Mammary epithelial cell (primary cell): ENCODE measurements at regions of chr12 and their contacts with region 1.

Region 1: GRCh38 chr12:125183187-125184067 is 118.2 kb downstream of the AACS start:
- DNase-seq: peak; percentile 58
- H3K4me3 ChIP-seq: no peak overlapping the region
- H3K27ac ChIP-seq: no peak overlapping the region
- H3K4me1 ChIP-seq: peaks cover 12% of the 10 kb centered on the region
- H3K27me3 ChIP-seq: peaks cover 13% of the 10 kb centered on the region
- CTCF ChIP-seq: peak; percentile 97 to 99

Region 2: GRCh38 chr12:124992874-124993625 is 190.4 kb before region 1 on chr12:
- CTCF ChIA-PET with region 1: no interaction called
- dilution Hi-C with region 1: no loop called
- in situ Hi-C with region 1: no loop called
- intact Hi-C with region 1: loop called (anchors 10 kb)
- DNase-seq: peak; percentile 68
- H3K4me3 ChIP-seq: peak overlapping the region; percentile 68 to 89 (median 79)
- H3K27ac ChIP-seq: peak overlapping the region; percentile 12
- H3K4me1 ChIP-seq: peaks cover 17% of the 10 kb centered on the region
- H3K27me3 ChIP-seq: no peaks in the 10 kb centered on the region
- CTCF ChIP-seq: peak; percentile 35 to 53

Region 3: GRCh38 chr12:125159683-125160082 is 23.7 kb before region 1 on chr12:
- CTCF ChIA-PET with region 1: no interaction called
- dilution Hi-C with region 1: no loop called
- in situ Hi-C with region 1: no loop called
- intact Hi-C with region 1: no loop called
- DNase-seq: no peak
- H3K4me3 ChIP-seq: no peak overlapping the region
- H3K27ac ChIP-seq: no peak overlapping the region
- H3K4me1 ChIP-seq: peaks cover 6% of the 10 kb centered on the region
- H3K27me3 ChIP-seq: no peaks in the 10 kb centered on the region
- CTCF ChIP-seq: no peak

Region 4: DNA sequence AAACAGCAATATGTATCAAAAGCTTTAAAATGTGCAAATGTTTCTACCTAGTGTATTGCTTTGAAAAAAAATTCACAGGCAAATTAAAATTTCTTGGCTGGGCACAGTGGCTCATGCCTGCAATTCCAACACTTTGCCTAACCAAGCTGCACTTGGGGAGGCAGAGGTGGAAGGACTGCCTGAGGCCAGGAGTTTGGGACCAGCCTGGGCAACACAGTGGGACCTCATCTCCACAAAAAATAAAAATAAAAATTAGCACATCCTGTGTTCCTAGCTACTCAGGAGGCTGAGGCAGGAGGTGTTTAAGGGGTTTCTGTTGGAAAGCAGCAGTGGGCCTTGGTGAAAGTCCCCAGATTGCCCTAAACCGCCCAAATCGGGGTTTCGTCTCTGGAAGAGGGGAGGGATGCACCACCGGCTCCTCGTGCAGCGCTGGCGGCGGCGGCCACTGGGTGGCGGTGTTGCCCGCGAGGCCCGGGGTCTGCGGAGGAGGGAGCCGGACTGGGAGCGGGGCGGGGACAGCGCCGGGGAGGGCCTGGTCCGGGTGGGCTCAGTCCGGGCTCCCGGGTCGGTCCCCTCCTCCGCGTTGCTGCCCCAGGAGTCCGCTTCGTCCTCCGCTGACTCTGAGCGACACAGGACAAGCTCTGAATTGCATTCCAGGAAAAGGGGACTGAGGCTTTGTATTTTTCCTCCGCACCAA is 147.4 kb after region 1 on chr12:
- CTCF ChIA-PET with region 1: no interaction called
- dilution Hi-C with region 1: no loop called
- in situ Hi-C with region 1: no loop called
- intact Hi-C with region 1: loop called (anchors 5 kb)
- DNase-seq: peak; percentile 27
- H3K4me3 ChIP-seq: peak overlapping the region; percentile 21 to 43 (median 36)
- H3K27ac ChIP-seq: no peak overlapping the region
- H3K4me1 ChIP-seq: no peaks in the 10 kb centered on the region
- H3K27me3 ChIP-seq: no peaks in the 10 kb centered on the region
- CTCF ChIP-seq: peak; percentile 54 to 84

Region 5: GRCh38 chr12:126069549-126070165 is 886.2 kb after region 1 on chr12:
- CTCF ChIA-PET with region 1: no interaction called
- dilution Hi-C with region 1: no loop called
- in situ Hi-C with region 1: no loop called
- intact Hi-C with region 1: loop called (anchors 10 kb)
- DNase-seq: peak; percentile 36
- H3K4me3 ChIP-seq: no peak overlapping the region
- H3K27ac ChIP-seq: no peak overlapping the region
- H3K4me1 ChIP-seq: no peaks in the 10 kb centered on the region
- H3K27me3 ChIP-seq: no peaks in the 10 kb centered on the region
- CTCF ChIP-seq: peak; percentile 51 to 56

Region 6: DNA sequence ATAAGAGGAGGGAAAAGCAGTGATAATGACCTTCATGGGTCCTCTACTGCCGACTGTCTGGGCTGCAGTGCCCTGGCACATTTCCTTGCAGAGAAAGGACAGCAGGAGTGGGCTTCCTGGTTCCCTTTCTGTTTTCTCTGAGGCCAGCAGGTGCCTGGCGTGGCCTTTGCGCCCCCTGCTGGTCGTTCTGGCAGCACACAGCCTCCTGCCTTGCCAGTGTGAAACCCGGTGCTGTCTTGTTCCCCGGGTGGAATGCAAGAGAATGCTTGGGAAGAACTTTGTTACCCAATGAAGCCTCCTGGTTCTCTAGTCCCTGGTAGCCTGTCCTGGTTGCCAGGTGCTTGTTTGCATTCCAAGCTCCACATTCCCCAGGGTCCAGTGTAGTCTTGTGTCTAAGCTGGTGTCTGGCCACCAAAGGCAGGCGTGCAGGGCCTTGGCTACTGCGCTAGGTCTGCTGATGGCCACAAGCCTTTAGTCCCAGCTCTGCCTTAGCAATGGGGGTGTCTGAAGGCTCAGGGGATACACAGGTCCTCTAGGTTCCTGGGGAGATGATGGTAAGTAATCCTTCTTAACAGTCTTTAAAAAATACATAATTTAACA is 1691.1 kb after region 1 on chr12:
- CTCF ChIA-PET with region 1: no interaction called
- dilution Hi-C with region 1: no loop called
- in situ Hi-C with region 1: no loop called
- intact Hi-C with region 1: loop called (anchors 1 kb)
- DNase-seq: peak; percentile 21
- H3K4me3 ChIP-seq: no peak overlapping the region
- H3K27ac ChIP-seq: no peak overlapping the region
- H3K4me1 ChIP-seq: no peaks in the 10 kb centered on the region
- H3K27me3 ChIP-seq: no peaks in the 10 kb centered on the region
- CTCF ChIP-seq: peak; percentile 87 to 96